Common myeloid progenitor, CD34-positive (primary cell): ENCODE measurements at regions of chr18 and their contacts with region 1.

Region 1: DNA sequence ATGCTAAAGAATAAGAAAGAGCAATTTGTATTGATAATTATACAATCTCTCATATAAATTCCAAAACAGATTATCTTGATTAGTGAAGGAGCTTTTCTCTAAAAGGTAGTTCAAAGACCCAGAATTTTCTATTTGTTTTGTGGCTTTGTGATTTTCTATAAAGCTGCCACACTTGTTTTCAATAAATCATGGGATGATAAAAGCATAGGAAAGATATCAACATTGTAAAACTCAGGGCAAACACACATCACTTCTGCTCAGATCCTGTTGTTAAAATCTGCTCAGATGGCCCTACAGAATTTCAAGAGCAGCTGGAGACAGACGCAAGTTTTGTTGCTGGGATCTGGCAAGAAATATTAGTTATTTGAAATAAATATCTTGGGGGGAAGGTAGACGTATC is 28.8 kb upstream of the CBLN2 start:
- DNase-seq: no peak
- H3K4me3 ChIP-seq: no peak overlapping the region
- H3K27ac ChIP-seq: no peak overlapping the region
- H3K4me1 ChIP-seq: no peaks in the 10 kb centered on the region
- H3K27me3 ChIP-seq: peaks cover 0 to 3% (median 0%) of the 10 kb centered on the region in 5 experiments

Region 2: DNA sequence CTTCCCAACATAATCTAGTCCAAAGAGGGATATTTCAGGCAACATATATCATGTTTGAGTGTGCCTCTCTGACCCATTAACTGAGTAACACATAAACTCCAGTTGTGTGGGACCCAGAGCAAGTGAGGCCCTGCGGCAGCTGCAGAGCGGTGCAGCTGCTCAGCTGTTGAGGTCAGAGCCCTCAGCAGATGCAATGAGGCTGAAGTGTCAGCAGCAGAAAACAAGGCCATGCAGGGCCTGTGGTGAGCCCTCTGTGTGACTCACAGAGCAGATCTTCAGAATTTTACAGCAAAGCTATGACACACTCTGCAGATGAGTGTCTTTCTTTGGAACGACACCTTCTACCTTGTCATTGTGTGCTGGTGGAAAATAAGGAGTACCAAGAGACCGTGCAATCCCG is 197.3 kb before region 1 on chr18:
- CTCF ChIA-PET with region 1: no interaction called
- POLR2A ChIA-PET with region 1: no interaction called
- DNase-seq: no peak
- H3K4me3 ChIP-seq: no peak overlapping the region
- H3K27ac ChIP-seq: no peak overlapping the region
- H3K4me1 ChIP-seq: no peaks in the 10 kb centered on the region
- H3K27me3 ChIP-seq: no peaks in the 10 kb centered on the region

Region 3: GRCh38 chr18:72530622-72531021 is 42.3 kb before region 1 on chr18:
- CTCF ChIA-PET with region 1: no interaction called
- POLR2A ChIA-PET with region 1: interaction called, 12 read pairs
- DNase-seq: no peak
- H3K4me3 ChIP-seq: no peak overlapping the region
- H3K27ac ChIP-seq: no peak overlapping the region
- H3K4me1 ChIP-seq: no peaks in the 10 kb centered on the region
- H3K27me3 ChIP-seq: peaks cover 0 to 16% (median 4%) of the 10 kb centered on the region in 5 experiments